GM10248 (cell line): ENCODE measurements at regions of chr6 and their contacts with region 1.

Region 1: GRCh38 chr6:38086346-38086745 is 266.8 kb downstream of the ZFAND3 start:
- DNase-seq: no peak
- CTCF ChIP-seq: no peak

Region 2: GRCh38 chr6:37940074-37940847 is 146.1 kb before region 1 on chr6:
- CTCF ChIA-PET with region 1: no interaction called
- POLR2A ChIA-PET with region 1: no interaction called
- DNase-seq: no peak
- CTCF ChIP-seq: no peak

Region 3: DNA sequence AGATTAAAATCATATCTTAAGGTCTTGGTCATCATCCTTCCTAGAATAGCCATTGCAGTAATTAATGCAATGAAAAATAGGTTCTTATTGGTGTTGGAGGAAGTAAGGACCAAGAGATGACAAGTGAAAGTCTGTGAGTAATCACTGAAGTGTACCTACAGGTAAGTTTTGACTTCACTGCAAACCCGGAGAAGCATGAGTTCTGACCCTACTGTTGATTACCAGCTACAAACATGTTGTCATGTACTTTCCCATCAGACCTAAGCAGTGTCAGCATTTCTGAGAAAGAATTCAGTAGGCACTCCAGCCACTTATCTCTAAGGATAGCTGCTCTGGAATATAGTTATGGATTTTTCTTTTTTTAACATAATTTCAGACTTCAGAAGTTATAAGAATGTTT is 14.0 kb after region 1 on chr6:
- CTCF ChIA-PET with region 1: interaction called, 13 read pairs
- POLR2A ChIA-PET with region 1: no interaction called
- DNase-seq: peak; percentile 59
- CTCF ChIP-seq: no peak

Region 4: GRCh38 chr6:38117281-38117680 is 30.9 kb after region 1 on chr6:
- CTCF ChIA-PET with region 1: no interaction called
- POLR2A ChIA-PET with region 1: no interaction called
- DNase-seq: no peak
- CTCF ChIP-seq: no peak